Left cardiac atrium (tissue), 4 donors: ENCODE measurements at regions of chr18 and their contacts with region 1.

Region 1: DNA sequence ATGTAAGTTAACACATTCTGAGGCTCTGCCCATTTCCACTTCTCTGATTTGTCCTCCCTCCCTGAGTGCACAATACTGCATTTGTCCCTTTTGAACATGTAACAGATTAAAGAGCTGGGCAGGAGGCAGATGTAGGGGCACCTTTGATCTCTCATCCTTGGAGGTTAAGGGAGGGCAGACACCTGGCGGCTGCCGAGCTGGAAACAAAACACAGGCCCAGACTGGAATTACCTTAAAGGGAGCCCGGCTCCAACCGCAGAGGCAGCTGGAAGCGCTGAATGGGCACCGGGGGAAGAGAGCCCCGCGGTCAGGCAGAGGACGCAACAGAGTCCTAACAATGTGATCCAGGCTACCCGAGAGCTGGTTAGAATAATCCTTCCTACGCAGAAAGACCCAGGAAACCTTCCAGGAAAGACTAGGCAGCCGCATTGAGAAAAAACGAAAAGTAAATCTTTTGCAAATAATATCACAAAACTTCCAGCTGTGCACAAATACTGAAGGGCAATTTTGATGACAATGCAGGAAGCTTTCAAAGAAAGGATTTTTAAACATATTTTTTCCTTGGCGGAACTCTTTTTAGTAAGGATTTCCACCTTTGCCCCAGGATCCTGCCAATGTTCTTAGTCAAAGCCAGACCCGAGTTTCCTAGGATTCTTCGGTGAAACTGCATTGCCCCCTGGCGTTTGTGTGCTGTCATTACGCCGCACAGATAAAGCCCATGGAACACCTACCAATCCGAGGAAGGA is 216.0 kb downstream of the TGIF1 start:
- DNase-seq: peak; percentile 74
- ATAC-seq: peak; percentile 93 to 94

Region 2: GRCh38 chr18:3281456-3282400 is 384.2 kb before region 1 on chr18:
- intact Hi-C with region 1: loop called (anchors 1 to 5 kb)
- DNase-seq: no peak
- ATAC-seq: peak; percentile 83 to 86

Region 3: GRCh38 chr18:3441290-3441689 is 224.7 kb before region 1 on chr18:
- intact Hi-C with region 1: loop called in 1 of 2 experiments (anchors 5 kb)
- DNase-seq: peak; percentile 32
- ATAC-seq: peak; percentile 68 to 88

Region 4: GRCh38 chr18:3447895-3448837 is 217.8 kb before region 1 on chr18:
- intact Hi-C with region 1: loop called (anchors 5 to 10 kb)
- DNase-seq: peak; percentile 95
- ATAC-seq: peak; percentile 78 to 82

Region 5: GRCh38 chr18:3454365-3455089 is 211.4 kb before region 1 on chr18:
- intact Hi-C with region 1: loop called (anchors 5 to 10 kb)
- DNase-seq: no peak
- ATAC-seq: no peak

Region 6: DNA sequence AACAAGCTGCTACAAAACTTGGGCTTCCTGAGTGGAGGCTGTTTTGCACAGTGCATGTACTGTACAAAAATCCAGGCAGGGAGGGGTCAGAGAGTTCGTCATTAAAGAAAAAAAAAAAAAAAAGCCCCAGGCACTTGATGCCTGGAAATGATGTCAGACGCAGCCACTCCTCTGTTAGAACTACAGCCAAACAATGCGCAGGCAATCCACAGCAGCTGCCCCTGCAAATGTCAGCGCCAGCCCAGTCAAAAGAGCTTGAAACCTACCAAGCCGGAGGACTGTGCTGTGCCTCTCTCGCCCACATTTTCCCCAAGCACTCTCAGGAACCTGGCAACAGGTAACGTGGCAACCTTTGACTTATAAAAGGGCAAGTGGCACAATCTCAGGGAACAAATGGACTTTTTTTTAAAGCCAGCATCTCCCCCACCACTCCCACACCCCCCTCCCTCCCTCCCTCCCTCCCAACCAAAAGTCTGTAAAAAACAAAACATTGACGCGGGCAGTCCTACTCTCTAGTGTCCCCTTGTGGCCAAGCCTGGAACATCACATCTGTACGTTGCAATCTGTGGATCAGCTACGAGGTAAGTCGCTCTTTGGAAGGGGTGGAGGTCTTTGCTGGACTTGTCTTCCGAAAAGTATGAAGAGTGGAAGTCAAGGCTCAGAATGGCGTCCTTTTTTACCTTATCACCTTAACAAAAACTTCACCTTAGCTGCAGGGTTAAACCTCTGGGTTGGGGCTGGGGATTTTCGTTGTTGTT is 71.9 kb before region 1 on chr18:
- intact Hi-C with region 1: loop called (anchors 2 to 10 kb)
- DNase-seq: peak; percentile 90
- ATAC-seq: peak; percentile 78 to 88